Right ventricle myocardium superior (tissue), 1 donor: ENCODE measurements at regions of chr12 and their contacts with region 1.

Region 1: DNA sequence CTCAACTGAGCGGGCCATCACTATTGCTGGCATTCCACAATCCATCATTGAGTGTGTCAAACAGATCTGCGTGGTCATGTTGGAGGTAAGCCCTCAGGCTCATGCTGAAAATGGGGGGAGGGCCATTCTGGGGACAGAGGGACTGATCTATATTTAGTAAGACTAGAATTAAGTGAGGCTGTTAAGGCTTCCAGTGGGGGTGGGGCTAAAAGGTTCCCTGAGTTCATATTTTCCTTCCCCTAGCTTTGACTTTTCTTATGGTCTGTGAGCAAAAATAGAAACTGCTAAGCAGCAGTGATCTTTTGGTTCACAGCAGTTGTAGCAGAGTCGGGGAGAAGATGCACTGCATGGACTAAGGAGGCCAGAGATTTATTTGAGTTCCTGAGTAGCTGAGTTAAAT is 9.2 kb downstream of the PCBP2 start:
- DNase-seq: no peak
- ATAC-seq: peak; percentile 87

Region 2: DNA sequence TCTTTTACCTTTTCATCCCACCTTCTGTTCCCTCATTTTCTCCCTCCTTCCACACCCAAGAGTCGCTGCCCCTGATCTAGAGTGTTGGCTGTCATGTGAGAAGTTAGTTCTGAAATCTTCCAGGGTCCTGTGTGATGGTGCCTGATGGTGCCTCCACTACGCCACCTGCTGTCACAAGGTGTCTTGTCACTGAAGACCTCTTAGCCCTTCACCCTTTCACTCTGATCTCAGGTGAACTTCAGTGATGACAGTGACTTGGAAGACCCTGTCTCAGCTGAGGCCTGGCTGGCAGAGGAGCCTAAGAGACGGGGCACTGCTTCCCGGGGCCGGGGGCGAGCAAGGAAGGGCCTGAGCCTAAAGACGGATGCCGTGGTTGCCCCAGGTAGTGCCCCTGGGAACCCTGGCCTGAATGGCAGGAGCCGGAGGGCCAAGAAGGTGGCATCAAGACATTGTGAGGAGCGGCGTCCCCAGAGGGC is 173.3 kb before region 1 on chr12:
- intact Hi-C with region 1: no loop called
- DNase-seq: peak; percentile 77
- ATAC-seq: peak; percentile 89

Region 3: DNA sequence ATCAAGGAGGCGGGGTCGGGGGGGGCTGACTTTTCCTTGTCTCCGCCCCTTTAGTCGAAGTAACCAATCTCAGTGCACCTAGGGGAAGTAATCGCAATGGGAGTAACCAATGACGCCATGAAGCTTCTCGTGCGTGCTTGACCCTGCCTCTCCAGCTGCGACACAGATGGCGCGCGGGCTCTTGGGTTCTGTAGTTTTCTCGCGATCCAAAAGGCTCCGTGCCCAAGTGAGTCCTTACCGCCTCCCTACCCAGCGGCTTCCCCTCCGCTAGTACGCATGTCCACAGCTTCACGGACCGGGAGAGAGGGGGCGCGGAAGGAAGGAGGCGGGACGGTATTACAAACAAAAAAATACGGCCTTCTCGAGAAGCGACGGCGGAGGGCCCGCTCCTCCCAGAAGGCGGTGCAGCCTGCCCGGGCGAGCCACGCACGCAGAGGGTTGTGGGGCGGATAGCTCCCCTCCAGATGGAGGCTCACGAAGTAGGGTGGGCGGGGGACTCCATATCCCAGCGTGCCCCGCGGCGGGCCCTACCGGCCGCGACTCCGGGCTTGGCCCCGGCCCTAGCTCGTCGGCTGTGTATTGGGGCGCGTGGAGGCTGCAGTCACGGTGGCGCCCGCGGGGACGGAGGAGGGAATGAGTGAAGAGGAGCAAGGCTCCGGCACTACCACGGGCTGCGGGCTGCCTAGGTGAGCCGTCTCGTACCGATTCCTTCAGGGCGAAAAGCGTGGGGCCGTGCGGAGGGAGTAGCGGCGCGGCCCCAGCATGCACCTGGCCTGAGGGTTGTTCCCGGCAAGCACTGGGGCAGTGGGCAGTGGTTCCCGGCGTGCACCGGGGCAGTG is 39.9 kb after region 1 on chr12 and contains the start of gene TARBP2:
- intact Hi-C with region 1: loop called (anchors 5 kb)
- DNase-seq: peak; percentile 99
- ATAC-seq: peak; percentile 88
- total RNA-seq, gene TARBP2: 10.8 TPM